PC-3 (cell line): ENCODE measurements at regions of chr1 and their contacts with region 1.

Region 1: DNA sequence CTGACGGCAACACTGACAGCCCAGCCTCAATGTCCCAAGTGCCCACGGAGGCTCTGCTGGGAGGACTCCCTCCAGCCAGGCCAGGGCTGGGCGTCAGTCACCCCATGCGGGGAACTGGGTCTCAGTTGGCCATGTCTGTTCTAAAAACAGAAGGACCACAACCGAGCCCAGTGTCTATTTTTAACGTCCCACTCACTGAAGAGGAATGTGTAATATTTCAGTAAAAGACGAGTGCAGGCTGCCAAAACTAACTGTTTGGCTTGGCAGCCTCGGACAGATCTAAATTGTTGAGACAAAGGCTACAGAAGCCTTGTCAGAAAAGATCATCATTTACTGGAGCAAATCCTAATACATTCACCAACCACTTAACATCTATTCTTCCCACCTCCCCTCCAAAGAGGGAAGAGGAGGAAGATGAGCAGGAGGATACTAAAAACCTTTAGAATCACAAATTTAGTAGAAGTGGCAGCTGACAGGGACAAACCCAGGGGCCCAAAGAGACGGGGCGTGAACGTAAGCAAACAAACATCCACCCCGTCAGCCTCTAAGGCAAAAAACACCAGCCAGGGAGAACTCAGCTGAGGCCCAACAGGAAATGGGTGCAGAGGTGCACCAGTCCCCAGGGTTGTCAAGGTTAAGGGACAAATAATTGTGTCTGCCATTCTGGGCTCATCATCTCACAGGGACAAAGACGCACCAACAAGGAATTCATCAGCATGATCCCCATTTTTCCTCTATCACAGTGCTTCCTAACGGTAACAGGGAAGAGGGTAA is 18.7 kb downstream of the C1orf198 start:
- DNase-seq: peak; percentile 92
- ATAC-seq: peak; percentile 87
- H3K4me3 ChIP-seq: peak overlapping the region; percentile 6; the same call in 1 of the 2 replicates
- H3K27ac ChIP-seq: peak overlapping the region; percentile 24
- H3K4me1 ChIP-seq: peaks cover 24% of the 10 kb centered on the region
- H3K27me3 ChIP-seq: no peaks in the 10 kb centered on the region
- CTCF ChIP-seq: no peak

Region 2: DNA sequence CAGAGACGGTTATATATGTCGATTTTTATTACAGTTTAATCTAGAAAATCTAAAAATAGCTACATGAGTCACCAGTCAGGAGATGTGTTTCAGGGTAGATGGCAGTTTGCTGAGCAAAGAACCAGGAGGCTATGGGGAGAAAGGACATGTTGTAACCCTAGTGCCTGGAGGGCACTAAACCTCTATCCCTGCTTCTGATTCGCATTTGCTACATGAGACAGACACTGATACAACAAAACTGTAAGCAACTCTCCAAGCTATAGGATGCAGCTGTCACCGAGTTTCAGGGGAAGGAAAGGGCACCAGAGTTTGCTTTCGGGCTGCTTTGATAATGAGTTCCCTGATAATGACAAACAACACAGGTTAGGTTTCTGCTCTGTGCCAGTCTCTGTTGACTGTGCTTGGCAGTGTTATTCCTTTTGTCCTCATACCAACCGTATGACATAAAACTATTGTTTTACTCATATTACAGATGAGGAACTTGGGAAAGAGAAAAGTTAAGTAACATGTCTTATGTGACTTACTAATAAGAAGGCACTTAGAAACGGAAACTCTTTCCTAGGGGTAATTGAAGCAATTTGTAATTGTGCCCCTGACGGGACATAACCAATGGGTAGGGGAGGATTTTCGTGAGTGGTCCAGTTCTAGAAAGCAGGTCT is 24.4 kb before region 1 on chr1:
- CTCF ChIA-PET with region 1: interaction called, 3 read pairs
- POLR2A ChIA-PET with region 1: no interaction called
- intact Hi-C with region 1: loop called (anchors 1 kb)
- DNase-seq: peak; percentile 88
- ATAC-seq: peak; percentile 83
- H3K4me3 ChIP-seq: peak overlapping the region; percentile 16; the same call in 1 of the 2 replicates
- H3K27ac ChIP-seq: peak overlapping the region; percentile 75
- H3K4me1 ChIP-seq: peaks cover 23% of the 10 kb centered on the region
- H3K27me3 ChIP-seq: no peaks in the 10 kb centered on the region
- CTCF ChIP-seq: no peak